Activated CD4-positive, alpha-beta T cell treated with anti-CD3 and anti-CD28 coated beads, Interleukin-2, amount 10 ng/mL, durations not matched to agents 24 days and 14 days (primary cell): ENCODE measurements at regions of chr12 and their contacts with region 1.

Region 1: GRCh38 chr12:19186722-19187661 is 57.5 kb downstream of the PLEKHA5 start:
- DNase-seq: no peak
- H3K4me3 Mint-ChIP-seq: no peak overlapping the region
- H3K27ac Mint-ChIP-seq: no peak overlapping the region
- H3K4me1 Mint-ChIP-seq: no peaks in the 10 kb centered on the region
- H3K27me3 Mint-ChIP-seq: peaks cover 7% of the 10 kb centered on the region

Region 2: GRCh38 chr12:18250313-18250916 is 936.6 kb before region 1 on chr12:
- intact Hi-C with region 1: loop called (anchors 2 kb)
- DNase-seq: peak; percentile 58
- H3K4me3 Mint-ChIP-seq: no peak overlapping the region
- H3K27ac Mint-ChIP-seq: no peak overlapping the region
- H3K4me1 Mint-ChIP-seq: no peaks in the 10 kb centered on the region
- H3K27me3 Mint-ChIP-seq: no peaks in the 10 kb centered on the region

Region 3: GRCh38 chr12:18430425-18431048 is 756.5 kb before region 1 on chr12:
- intact Hi-C with region 1: loop called (anchors 5 kb)
- DNase-seq: no peak
- H3K4me3 Mint-ChIP-seq: no peak overlapping the region
- H3K27ac Mint-ChIP-seq: no peak overlapping the region
- H3K4me1 Mint-ChIP-seq: no peaks in the 10 kb centered on the region
- H3K27me3 Mint-ChIP-seq: no peaks in the 10 kb centered on the region

Region 4: DNA sequence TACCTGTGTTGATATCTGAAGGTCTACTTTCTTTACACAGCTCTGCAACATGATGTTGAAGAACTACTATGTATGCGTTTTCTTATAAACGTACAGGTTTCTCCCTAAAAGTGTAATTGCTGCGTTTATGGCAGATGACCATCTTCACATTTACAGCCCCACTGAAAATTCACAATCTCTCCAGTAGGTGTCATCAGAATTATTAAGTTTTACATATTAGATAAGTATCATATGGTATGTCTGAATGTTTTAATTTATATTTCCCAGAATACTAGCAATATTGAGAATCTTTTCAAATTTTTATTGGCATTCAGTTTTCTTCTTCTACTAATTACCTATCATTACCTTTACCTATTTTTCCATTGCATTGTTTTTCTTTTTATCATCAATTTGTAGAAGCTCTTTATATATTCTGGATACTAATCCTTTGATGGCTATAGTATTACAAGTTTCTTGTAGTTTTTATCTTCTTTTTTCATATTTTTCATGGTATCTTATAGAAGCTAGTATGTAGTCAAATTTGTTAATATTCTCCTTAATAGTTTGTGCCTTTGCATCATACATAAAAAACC is 325.6 kb before region 1 on chr12:
- intact Hi-C with region 1: loop called (anchors 2 kb)
- DNase-seq: no peak
- H3K4me3 Mint-ChIP-seq: no peak overlapping the region
- H3K27ac Mint-ChIP-seq: no peak overlapping the region
- H3K4me1 Mint-ChIP-seq: no peaks in the 10 kb centered on the region
- H3K27me3 Mint-ChIP-seq: no peaks in the 10 kb centered on the region